Activated CD4-positive, alpha-beta T cell treated with anti-CD3 and anti-CD28 coated beads for 36 hours (primary cell): ENCODE measurements at regions of chr9 and their contacts with region 1.

Region 1: DNA sequence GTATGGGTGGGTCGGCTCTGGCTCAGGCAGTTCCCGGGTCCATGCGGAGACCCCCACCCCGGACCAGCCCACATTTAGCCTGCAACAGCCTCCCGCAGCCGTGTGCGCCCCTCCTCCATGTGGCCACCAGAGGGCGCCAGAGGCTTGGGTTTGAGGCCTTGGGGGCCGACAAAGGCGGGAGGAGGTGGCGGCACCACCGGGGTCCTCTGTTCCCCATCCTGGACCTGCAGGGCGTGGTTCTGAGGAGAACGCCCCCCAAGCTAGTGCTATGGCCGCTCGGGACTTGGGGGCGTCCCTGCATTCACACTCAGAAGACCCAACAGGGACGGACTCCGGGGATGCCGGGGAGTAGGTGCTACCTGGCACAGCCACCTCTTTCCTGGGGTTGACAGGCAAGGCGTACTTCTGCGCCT is 16.5 kb downstream of the ASS1 start:
- DNase-seq: peak; percentile 83
- ATAC-seq: peak; percentile 71
- H3K4me3 Mint-ChIP-seq: no peak overlapping the region
- H3K27ac Mint-ChIP-seq: no peak overlapping the region
- H3K4me1 Mint-ChIP-seq: no peaks in the 10 kb centered on the region
- H3K27me3 Mint-ChIP-seq: peaks cover 17% of the 10 kb centered on the region

Region 2: DNA sequence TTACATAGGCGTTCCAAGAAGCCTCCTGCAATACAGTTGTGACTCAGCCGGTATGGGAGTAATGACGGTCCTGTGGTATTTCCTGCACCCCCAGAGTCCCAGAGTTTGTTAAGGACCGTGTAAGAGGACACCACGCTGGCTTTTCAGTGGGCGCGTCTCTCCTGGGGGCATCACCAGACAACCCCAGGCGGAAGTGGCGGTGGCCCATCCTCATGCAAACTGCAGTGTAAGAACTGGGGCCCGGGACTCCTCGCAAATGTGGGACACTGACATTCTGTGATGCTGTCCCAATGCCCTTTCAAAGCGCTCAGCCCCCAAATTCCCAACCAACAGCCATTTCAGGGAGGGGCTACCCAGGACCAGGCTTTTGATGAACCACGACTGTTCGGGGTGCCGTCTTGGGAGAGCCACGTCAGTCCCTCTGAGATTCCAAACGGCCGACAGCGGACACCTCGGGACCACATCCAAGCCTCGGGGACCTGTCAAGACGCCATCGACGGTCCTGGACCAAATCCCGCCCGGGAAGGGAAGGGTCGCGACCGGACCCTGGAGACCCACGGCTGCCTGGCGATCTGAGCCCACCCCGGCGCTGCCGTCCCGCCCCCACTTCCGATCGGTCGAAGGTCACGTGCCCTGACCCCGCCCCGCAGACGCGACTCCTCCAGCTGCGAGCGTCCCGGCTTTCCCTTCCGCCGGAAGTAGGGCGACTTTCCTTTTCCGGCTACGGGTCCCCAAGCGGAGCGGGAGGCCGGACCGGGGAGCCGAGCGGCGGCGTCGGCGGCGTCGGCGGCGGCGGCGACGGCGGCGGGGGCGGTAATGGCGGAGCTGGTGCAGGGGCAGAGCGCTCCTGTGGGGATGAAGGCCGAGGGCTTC is 117.9 kb after region 1 on chr9 and contains the start of gene FUBP3:
- CTCF ChIA-PET with region 1: no interaction called
- POLR2A ChIA-PET with region 1: no interaction called
- intact Hi-C with region 1: loop called in 1 of 2 experiments (anchors 5 kb)
- DNase-seq: peak; percentile 96
- ATAC-seq: peak; percentile 94
- H3K4me3 Mint-ChIP-seq: peak within 1 kb of the TSS; percentile 90
- H3K27ac Mint-ChIP-seq: peak within 1 kb of the TSS; percentile 89
- H3K4me1 Mint-ChIP-seq: peaks cover 32% of the 10 kb centered on the region
- H3K27me3 Mint-ChIP-seq: no peaks in the 10 kb centered on the region
- total RNA-seq, gene FUBP3: 36.4 to 38.5 TPM